Naive thymus-derived CD4-positive, alpha-beta T cell (primary cell): ENCODE measurements at regions of chr17 and their contacts with region 1.

Region 1: DNA sequence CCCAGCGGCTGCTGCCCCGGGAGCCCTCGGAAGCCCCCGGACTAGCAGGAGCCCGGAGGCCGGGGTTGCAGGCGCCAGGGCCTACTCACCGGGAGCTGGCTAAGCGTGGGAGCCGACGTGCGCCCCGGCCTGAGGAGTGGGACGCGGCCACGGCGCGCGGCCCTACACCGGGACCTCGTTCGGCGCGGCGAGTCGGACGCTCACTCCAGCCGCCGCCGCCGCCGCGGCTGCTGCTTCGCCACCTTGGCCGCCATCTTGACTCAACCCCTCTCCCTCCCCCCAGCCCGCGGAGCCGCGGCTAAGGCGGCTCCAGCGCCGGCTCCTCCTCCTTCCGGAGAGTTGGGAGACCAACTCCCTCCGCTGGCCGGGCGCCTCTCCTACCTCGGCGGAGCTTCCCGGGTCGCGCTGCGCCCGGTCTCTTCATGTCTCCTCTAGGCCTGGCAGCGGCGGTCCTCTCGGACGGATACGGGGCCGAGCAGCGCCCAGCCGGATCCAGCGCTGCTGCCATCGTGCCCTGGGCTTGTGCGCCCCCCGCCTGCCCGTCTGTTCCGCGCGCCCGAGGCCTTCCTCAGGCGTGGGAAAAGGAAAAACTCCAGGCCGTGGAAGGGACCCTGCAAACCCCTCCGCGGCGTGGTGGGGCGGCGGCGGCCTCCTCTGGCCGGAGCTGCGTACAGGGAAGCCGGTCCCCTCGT is at the start of gene NCOR1:
- DNase-seq: peak; percentile 76 to 89 (median 82)
- ATAC-seq: peak; percentile 93
- H3K4me3 ChIP-seq: peak within 1 kb of the TSS; percentile 76
- H3K4me3 Mint-ChIP-seq: peak within 1 kb of the TSS; percentile 89 to 99 (median 96)
- H3K27ac ChIP-seq: peak within 1 kb of the TSS; percentile 91
- H3K27ac Mint-ChIP-seq: peak within 1 kb of the TSS; percentile 58 to 98 (median 93)
- H3K4me1 ChIP-seq: peaks cover 22 to 29% of the 10 kb centered on the region in 2 donors
- H3K4me1 Mint-ChIP-seq: peaks cover 25 to 69% (median 50%) of the 10 kb centered on the region in 7 donors
- H3K27me3 ChIP-seq: no peaks in the 10 kb centered on the region
- H3K27me3 Mint-ChIP-seq: no peaks in the 10 kb centered on the region
- total RNA-seq, gene NCOR1: 131 to 169 (median 149) TPM

Region 2: DNA sequence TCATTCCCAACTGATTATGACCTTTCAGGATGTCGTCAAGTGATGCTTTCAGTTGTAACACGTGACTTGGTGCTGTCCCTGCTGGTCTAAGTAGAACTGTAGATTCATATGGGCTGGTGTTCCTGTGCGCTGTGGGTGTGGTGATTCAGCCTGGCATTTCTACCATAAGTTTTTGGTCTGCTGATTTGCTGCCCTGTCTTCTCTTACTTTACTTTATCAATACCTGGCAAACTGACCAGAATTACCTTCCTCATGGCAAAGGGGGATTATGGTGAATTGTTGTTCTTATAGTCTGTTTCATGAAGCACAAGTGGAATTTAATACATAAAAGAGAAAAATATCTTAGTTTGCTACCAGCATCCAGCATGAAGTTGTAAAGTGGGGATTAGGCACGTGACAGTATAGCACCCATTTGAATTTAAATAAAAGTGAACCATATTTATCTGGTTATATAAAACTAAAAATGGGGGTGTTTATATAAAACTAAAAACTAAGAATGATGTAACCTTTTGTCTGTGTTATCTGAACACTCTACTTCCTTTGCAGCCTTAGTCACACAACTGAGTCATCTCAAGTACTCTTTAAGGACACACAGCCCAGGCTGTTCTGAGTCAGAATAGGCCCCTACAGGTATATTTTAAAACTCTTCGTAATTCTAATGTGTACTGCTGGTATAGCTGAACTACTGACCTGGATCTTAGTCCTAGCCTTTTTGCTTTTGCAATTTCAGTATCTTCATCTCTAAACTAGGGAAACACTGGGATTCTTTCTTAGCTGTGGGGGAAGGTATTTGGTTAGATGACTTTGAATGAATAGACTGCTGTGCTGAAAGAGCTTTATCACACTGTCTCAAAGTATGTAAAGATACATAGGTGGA is 187.5 kb before region 1 on chr17:
- CTCF ChIA-PET with region 1: no interaction called
- POLR2A ChIA-PET with region 1: no interaction called
- intact Hi-C with region 1: loop called in 1 of 2 experiments (anchors 10 kb)
- DNase-seq: peak in 2 of 9 donors; percentile 15 to 37
- ATAC-seq: peak; percentile 77
- H3K4me3 ChIP-seq: no peak overlapping the region
- H3K4me3 Mint-ChIP-seq: peak overlapping the region in 2 of 10 donors; percentile 26 to 67
- H3K27ac ChIP-seq: no peak overlapping the region
- H3K27ac Mint-ChIP-seq: peak overlapping the region; percentile 45 to 94 (median 81)
- H3K4me1 ChIP-seq: no peaks in the 10 kb centered on the region
- H3K4me1 Mint-ChIP-seq: peaks cover 0 to 26% (median 4%) of the 10 kb centered on the region in 7 donors
- H3K27me3 ChIP-seq: no peaks in the 10 kb centered on the region
- H3K27me3 Mint-ChIP-seq: no peaks in the 10 kb centered on the region

Region 3: DNA sequence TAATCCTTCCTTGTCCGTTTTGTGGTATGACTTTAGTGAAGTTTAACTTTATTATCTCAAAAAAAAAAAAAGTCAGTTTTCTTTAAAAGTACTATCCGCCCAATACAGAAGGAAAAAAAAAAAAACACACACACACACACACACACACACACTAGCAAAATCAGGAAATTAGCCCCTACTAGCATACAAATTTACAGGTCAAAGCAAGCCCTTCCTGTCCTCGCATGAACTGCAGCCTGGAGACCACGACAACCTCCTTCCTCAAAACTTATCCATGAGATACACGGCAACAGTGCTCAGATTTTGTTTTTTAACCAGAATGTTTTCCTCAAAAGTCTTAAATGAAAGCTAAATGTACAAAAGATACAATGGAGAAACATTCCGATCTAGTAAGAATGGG is 16.3 kb before region 1 on chr17:
- CTCF ChIA-PET with region 1: no interaction called
- POLR2A ChIA-PET with region 1: interaction called, 3 read pairs
- intact Hi-C with region 1: loop called in 1 of 2 experiments (anchors 2 kb)
- DNase-seq: no peak
- ATAC-seq: no peak
- H3K4me3 ChIP-seq: no peak overlapping the region
- H3K4me3 Mint-ChIP-seq: peak overlapping the region in 9 of 10 donors; percentile 1 to 66 (median 40)
- H3K27ac ChIP-seq: no peak overlapping the region
- H3K27ac Mint-ChIP-seq: peak overlapping the region in 8 of 9 donors; percentile 23 to 75 (median 66)
- H3K4me1 ChIP-seq: peaks cover 0 to 4% of the 10 kb centered on the region in 2 donors
- H3K4me1 Mint-ChIP-seq: peaks cover 27 to 75% (median 57%) of the 10 kb centered on the region in 7 donors
- H3K27me3 ChIP-seq: no peaks in the 10 kb centered on the region
- H3K27me3 Mint-ChIP-seq: no peaks in the 10 kb centered on the region

Region 4: GRCh38 chr17:16353317-16354174 is 138.1 kb after region 1 on chr17 and contains the start of gene CENPV:
- CTCF ChIA-PET with region 1: no interaction called
- POLR2A ChIA-PET with region 1: interaction called, 3 read pairs
- intact Hi-C with region 1: loop called (anchors 1 to 2 kb)
- DNase-seq: peak; percentile 62 to 76 (median 71)
- ATAC-seq: peak; percentile 96
- H3K4me3 ChIP-seq: peak within 1 kb of the TSS; percentile 78
- H3K4me3 Mint-ChIP-seq: peak within 1 kb of the TSS; percentile 89 to 98 (median 95)
- H3K27ac ChIP-seq: peak within 1 kb of the TSS; percentile 73
- H3K27ac Mint-ChIP-seq: peak within 1 kb of the TSS; percentile 73 to 98 (median 86)
- H3K4me1 ChIP-seq: peaks cover 4 to 5% of the 10 kb centered on the region in 2 donors
- H3K4me1 Mint-ChIP-seq: peaks cover 11 to 23% (median 19%) of the 10 kb centered on the region in 7 donors
- H3K27me3 ChIP-seq: no peaks in the 10 kb centered on the region
- H3K27me3 Mint-ChIP-seq: peaks cover 0 to 27% (median 0%) of the 10 kb centered on the region in 5 donors
- total RNA-seq, gene CENPV: 9.8 to 30.3 (median 21.7) TPM

Region 5: GRCh38 chr17:16415031-16415924 is 199.9 kb after region 1 on chr17 and contains the start of gene TRPV2:
- CTCF ChIA-PET with region 1: no interaction called
- POLR2A ChIA-PET with region 1: no interaction called
- intact Hi-C with region 1: loop called (anchors 1 to 10 kb)
- DNase-seq: peak in 8 of 9 donors; percentile 36 to 58 (median 47)
- ATAC-seq: peak; percentile 57
- H3K4me3 ChIP-seq: peak within 1 kb of the TSS; percentile 93
- H3K4me3 Mint-ChIP-seq: peak within 1 kb of the TSS; percentile 90 to 100 (median 98)
- H3K27ac ChIP-seq: peak within 1 kb of the TSS; percentile 94
- H3K27ac Mint-ChIP-seq: peak within 1 kb of the TSS; percentile 96 to 100 (median 98)
- H3K4me1 ChIP-seq: peaks cover 37 to 47% of the 10 kb centered on the region in 2 donors
- H3K4me1 Mint-ChIP-seq: peaks cover 33 to 55% (median 42%) of the 10 kb centered on the region in 7 donors
- H3K27me3 ChIP-seq: no peaks in the 10 kb centered on the region
- H3K27me3 Mint-ChIP-seq: no peaks in the 10 kb centered on the region
- total RNA-seq, gene TRPV2: 66.8 to 141 (median 80.0) TPM

Region 6: GRCh38 chr17:16653209-16654041 is 438.0 kb after region 1 on chr17 and contains the start of gene ZNF624:
- CTCF ChIA-PET with region 1: no interaction called
- POLR2A ChIA-PET with region 1: no interaction called
- intact Hi-C with region 1: loop called in 1 of 2 experiments (anchors 2 kb)
- DNase-seq: peak; percentile 75 to 87 (median 84)
- ATAC-seq: peak; percentile 98
- H3K4me3 ChIP-seq: peak within 1 kb of the TSS; percentile 76
- H3K4me3 Mint-ChIP-seq: peak within 1 kb of the TSS; percentile 81 to 93 (median 89)
- H3K27ac ChIP-seq: peak within 1 kb of the TSS; percentile 78
- H3K27ac Mint-ChIP-seq: peak within 1 kb of the TSS; percentile 7 to 91 (median 78)
- H3K4me1 ChIP-seq: peaks cover 0 to 11% of the 10 kb centered on the region in 2 donors
- H3K4me1 Mint-ChIP-seq: peaks cover 6 to 25% (median 21%) of the 10 kb centered on the region in 7 donors
- H3K27me3 ChIP-seq: no peaks in the 10 kb centered on the region
- H3K27me3 Mint-ChIP-seq: peaks cover 0 to 13% (median 0%) of the 10 kb centered on the region in 5 donors
- total RNA-seq, gene ZNF624: 3.8 to 11.4 (median 6.7) TPM